Astrocyte of the cerebellum (primary cell): ENCODE measurements at regions of chr1 and their contacts with region 1.

Region 1: DNA sequence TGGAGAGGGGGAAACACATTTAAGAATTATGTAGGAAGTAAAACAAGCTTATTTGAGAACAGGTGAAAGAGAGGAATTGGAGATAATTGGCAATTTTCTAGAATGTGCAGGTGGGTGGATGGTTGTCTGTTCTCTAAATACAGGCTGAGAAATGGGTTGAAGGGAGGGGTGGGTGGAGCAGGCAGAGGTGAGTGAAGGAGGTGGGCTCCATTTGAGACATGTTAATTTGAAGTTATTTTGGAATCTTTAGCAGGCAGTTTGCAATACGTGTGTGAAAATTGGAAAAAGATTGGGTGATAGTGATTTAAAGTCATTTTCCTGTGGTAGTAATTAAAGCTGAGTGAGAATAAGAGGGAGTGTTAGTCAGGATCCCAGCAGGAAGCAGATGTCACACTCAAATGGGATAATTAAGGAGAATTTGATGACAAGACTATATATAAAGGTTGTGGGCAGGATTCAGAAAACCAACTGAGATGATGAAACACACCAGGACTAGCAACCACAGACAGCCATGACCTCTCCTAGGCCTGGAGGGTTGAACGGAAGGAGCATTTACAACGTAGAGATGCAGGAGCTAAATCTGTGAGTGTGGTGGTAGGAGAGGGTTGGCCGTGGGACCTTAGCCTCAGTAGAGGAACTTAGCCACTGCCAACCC is 40.6 kb downstream of the CHRM3 start:
- DNase-seq: no peak
- H3K4me3 ChIP-seq: no peak overlapping the region
- CTCF ChIP-seq: no peak

Region 2: GRCh38 chr1:239337776-239338430 is 89.0 kb before region 1 on chr1:
- in situ Hi-C with region 1: no loop called
- DNase-seq: no peak
- H3K4me3 ChIP-seq: no peak overlapping the region
- CTCF ChIP-seq: no peak

Region 3: GRCh38 chr1:239511870-239512269 is 84.9 kb after region 1 on chr1:
- in situ Hi-C with region 1: no loop called
- DNase-seq: no peak
- H3K4me3 ChIP-seq: no peak overlapping the region
- CTCF ChIP-seq: no peak

Region 4: GRCh38 chr1:239898062-239898730 is 471.2 kb after region 1 on chr1:
- in situ Hi-C with region 1: loop called (anchors 25 kb)
- DNase-seq: peak; percentile 64
- H3K4me3 ChIP-seq: no peak overlapping the region
- CTCF ChIP-seq: peak; percentile 92